ENCODE measurements at regions of chr10 and their contacts with region 1.

Region 1: DNA sequence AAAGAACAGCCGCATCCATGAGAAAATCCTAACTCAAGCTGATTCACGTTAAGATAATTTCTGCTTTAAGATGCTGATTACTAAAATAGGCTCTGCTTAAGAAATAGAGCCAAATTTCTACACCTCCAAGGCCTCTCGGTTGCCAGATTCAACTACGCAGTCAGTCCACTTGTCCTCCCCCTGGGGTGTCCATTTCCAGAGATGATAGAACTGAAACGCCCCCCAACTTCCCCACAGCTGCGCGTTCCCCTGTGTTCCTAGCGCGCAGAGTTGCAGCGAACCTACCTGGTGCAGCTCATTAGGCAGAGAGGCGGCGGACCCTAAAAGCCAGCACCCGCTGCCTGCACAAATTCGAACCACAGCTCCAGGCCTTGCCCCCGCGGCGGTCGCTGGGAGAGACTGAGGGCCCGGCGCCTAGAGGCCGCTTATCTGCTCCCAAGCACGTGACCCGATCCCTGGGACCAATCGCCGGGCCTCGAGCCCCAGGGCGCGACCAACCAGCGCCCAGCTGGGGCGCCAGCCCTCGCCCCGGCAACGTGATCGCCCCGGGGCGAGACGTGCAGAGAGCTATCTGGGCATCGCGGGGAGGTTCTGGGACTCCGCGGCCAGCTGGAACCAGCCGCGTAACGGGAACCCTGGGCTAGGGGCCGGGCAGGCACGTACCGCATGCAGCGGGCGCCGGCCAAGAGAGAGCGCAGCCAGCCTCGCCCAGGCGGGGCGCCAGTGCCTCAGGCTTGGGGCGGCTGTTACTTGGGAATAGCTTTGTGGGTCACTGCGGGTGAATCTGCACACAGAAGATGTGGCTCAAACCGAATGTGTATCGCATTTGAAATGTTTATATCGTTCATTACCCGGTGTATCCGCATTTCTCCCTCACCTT is at the start of gene PPP1R3C:
- DNase-seq: peak; percentile 79
- H3K4me3 ChIP-seq: peak within 1 kb of the TSS; percentile 24 to 52 (median 35)
- H3K27ac ChIP-seq: peak within 1 kb of the TSS; percentile 72 to 87 (median 77)
- H3K4me1 ChIP-seq: peaks cover 0 to 26% (median 4%) of the 10 kb centered on the region in 4 donors
- H3K27me3 ChIP-seq: peaks cover 22% of the 10 kb centered on the region
- CTCF ChIP-seq: peak in 3 of 5 experiments; percentile 10 to 18 (median 15)
- EP300 ChIP-seq: no peak
- POLR2A ChIP-seq: peak; percentile 64
- total RNA-seq, gene PPP1R3C: 1.1 to 4.6 (median 3.0) TPM

Region 2: DNA sequence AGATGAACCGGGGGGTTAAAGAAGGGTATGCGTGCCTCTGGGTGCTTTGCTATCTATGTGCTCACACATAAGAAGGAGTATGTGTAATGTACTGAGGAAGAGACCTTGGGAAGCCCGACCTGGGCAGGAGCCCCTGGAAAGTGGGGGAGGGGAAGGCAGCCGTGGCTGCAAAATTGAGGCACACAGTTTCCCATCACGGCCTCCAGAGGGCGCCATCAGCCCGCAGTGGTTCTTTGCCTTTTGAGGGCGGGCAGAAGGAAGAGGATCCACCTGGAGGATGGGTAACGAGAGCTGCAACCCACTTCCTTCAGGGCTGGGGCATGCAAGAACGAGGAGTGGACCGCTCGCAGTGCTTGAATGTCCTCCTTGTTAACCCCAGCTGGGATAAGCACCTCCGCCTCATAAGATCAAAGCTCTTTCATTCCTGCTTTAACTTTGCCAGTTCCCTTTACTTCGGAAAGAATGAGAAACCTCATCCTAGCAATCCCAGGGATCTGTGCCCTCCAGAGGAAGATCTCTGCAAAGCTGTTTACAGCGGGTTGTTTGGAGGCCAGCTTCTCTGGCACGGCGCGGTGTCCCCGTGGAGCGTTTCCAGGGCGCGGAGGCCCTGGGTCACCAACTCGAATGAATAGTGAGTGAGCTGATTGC is 334.6 kb before region 1 on chr10:
- in situ Hi-C with region 1: loop called in 2 of 4 experiments (anchors 25 kb)
- intact Hi-C with region 1: no loop called
- DNase-seq: peak; percentile 71
- H3K4me3 ChIP-seq: peak overlapping the region in 3 of 4 donors; percentile 21 to 52 (median 26)
- H3K27ac ChIP-seq: no peak overlapping the region
- H3K4me1 ChIP-seq: peaks cover 6 to 11% (median 9%) of the 10 kb centered on the region in 4 donors
- H3K27me3 ChIP-seq: no peaks in the 10 kb centered on the region
- CTCF ChIP-seq: peak; percentile 81 to 92 (median 89)
- EP300 ChIP-seq: no peak
- POLR2A ChIP-seq: no peak

Region 3: DNA sequence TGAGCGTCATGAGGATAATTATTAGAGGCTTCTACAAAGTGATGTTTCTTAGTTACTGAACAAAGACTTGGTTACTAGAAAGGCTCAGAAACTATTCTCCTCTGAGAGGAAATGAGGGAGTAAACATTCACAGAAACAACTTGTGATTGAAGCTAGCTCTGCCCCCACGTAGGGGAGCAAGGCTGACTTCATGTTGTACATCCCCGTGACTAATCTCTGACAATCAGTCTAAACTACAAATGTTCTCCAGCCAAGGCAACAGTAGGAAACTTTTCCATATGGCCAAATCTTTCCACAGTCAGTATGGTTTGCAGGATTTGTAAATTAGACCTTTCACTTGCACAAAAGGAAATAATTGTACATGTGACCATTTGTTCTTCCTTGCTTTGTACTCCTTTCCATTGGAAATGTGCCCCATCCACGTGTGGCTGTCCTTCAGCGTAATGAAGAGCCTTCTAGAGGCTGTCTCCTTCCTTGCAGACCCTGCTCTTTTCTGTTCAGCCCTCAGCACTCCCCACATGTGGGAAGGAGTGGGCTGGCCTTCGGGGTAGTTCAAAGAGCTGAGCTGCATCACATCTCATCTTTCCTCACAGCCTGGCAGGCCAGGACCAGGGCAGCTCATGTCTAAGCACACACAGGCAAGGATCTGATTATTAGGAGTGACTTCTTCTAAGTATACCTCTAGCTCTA is 319.0 kb before region 1 on chr10:
- in situ Hi-C with region 1: loop called in 1 of 4 experiments (anchors 25 kb)
- intact Hi-C with region 1: no loop called
- DNase-seq: no peak
- H3K4me3 ChIP-seq: no peak overlapping the region
- H3K27ac ChIP-seq: no peak overlapping the region
- H3K4me1 ChIP-seq: no peaks in the 10 kb centered on the region
- H3K27me3 ChIP-seq: no peaks in the 10 kb centered on the region
- CTCF ChIP-seq: no peak
- EP300 ChIP-seq: no peak
- POLR2A ChIP-seq: no peak

Region 4: DNA sequence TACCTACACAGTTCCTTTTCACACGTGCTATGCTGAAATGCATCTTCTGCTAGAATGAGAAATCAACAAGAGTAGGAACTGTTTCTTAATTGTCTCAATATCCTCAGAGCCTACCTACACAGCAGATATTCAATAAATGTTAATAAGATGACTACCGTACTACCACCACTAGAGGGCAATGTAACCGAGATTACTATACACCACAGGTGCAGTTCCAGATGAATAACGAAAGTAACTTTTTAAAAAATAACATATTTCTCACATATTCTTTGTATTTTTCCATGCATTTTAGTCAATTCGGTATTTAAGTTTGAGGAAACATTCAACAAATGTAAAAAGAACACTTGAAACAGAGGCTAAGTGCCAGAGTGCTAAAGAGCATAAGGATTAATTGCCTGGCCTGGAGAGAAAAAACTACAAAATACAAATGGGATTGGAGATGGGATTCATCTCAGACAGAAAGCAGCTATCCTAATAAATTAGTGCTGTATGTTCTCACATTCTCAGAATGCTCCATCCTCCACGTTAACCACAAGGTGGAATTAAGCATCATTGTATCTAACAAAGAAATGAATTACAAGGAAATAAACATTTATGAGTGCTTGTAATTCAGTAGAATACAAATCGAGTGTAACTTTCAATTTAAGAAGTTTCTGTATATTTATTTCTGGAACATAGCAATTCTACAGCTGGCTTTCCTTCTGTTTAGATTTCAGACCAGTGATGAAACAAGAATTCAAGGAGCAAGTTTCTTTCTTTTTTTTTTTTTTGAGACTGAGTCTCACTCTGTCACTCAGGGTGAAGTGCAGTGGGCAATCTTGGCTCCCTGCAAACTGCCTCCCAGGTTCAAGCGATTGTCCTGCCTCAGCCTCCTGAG is 243.0 kb before region 1 on chr10:
- in situ Hi-C with region 1: loop called in 2 of 4 experiments (anchors 10 to 25 kb)
- intact Hi-C with region 1: loop called (anchors 10 kb)
- DNase-seq: no peak
- H3K4me3 ChIP-seq: peak overlapping the region in 1 of 4 donors; percentile 16
- H3K27ac ChIP-seq: peak overlapping the region in 2 of 4 donors; percentile 9 to 21
- H3K4me1 ChIP-seq: peaks cover 0 to 9% (median 5%) of the 10 kb centered on the region in 4 donors
- H3K27me3 ChIP-seq: peaks cover 9% of the 10 kb centered on the region
- CTCF ChIP-seq: peak; percentile 66 to 75 (median 69)
- EP300 ChIP-seq: no peak
- POLR2A ChIP-seq: no peak

Region 5: GRCh38 chr10:91493313-91493712 is 139.6 kb before region 1 on chr10:
- in situ Hi-C with region 1: loop called (anchors 5 to 25 kb)
- intact Hi-C with region 1: loop called (anchors 2 kb)
- DNase-seq: no peak
- H3K4me3 ChIP-seq: no peak overlapping the region
- H3K27ac ChIP-seq: no peak overlapping the region
- H3K4me1 ChIP-seq: no peaks in the 10 kb centered on the region
- H3K27me3 ChIP-seq: no peaks in the 10 kb centered on the region
- CTCF ChIP-seq: peak; percentile 42 to 62 (median 49)
- EP300 ChIP-seq: no peak
- POLR2A ChIP-seq: no peak

Region 6: DNA sequence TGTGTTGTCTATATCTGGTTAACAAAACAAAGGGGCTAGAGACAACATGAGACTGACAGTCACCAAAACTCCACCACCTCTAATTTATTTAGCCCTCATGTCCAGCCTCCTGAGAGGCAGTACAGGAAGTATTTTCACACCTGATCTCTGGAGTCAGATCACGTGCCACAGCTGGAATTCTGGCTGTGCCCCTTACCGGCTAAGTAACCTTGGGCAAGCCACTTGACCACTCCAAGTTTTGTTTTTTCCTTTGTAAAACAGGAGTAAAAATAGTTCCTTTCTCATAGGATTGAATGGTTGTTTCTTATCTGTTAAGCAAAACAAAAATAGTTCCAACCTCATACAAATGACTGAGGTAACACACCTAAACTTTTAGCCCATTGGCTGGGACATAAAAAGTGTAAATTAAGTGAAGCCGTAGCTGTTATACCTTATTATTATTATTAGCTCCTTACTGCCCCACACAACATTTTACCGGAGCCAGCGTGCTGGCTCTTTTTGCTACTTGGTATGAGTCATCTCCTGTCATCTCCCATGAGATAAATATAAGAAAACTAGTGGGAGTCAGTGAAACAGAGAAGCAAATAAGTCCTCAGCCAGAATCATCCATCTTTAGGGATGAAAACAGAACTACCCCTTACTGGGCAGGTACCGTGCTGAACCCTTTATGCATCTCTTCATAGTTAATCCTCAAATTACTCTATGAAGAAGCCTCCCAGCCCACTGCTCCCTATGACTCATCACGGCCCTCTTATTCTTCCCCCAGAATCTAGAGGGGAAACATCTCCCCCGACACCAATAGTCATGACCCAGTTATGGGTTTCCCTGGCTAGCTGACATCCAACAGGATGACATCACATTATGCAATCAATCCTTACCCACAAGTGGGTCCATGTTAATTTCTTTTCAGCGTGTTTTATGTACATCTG is 44.9 kb before region 1 on chr10:
- in situ Hi-C with region 1: no loop called
- intact Hi-C with region 1: loop called (anchors 5 kb)
- DNase-seq: no peak
- H3K4me3 ChIP-seq: no peak overlapping the region
- H3K27ac ChIP-seq: peak overlapping the region; percentile 74 to 94 (median 77)
- H3K4me1 ChIP-seq: peaks cover 25 to 51% (median 31%) of the 10 kb centered on the region in 4 donors
- H3K27me3 ChIP-seq: peaks cover 9% of the 10 kb centered on the region
- CTCF ChIP-seq: no peak
- EP300 ChIP-seq: no peak
- POLR2A ChIP-seq: no peak